Motor neuron (in vitro differentiated cells): ENCODE measurements at regions of chr16 and their contacts with region 1.

Region 1: GRCh38 chr16:24499193-24499814 is 40.1 kb upstream of the RBBP6 start:
- ATAC-seq: peak; percentile 56 to 85 (median 66)
- H3K4me3 ChIP-seq: no peak overlapping the region
- H3K27ac ChIP-seq: no peak overlapping the region
- H3K4me1 ChIP-seq: no peaks in the 10 kb centered on the region

Region 2: GRCh38 chr16:22721511-22722100 is 1777.7 kb before region 1 on chr16:
- in situ Hi-C with region 1: no loop called
- ATAC-seq: peak in 3 of 8 experiments; percentile 80 to 96 (median 90)
- H3K4me3 ChIP-seq: no peak overlapping the region
- H3K27ac ChIP-seq: no peak overlapping the region
- H3K4me1 ChIP-seq: no peaks in the 10 kb centered on the region

Region 3: GRCh38 chr16:24041826-24042631 is 457.3 kb before region 1 on chr16:
- in situ Hi-C with region 1: loop called in 8 of 9 experiments (anchors 5 to 25 kb)
- ATAC-seq: peak; percentile 35 to 92 (median 54)
- H3K4me3 ChIP-seq: no peak overlapping the region
- H3K27ac ChIP-seq: no peak overlapping the region
- H3K4me1 ChIP-seq: no peaks in the 10 kb centered on the region

Region 4: DNA sequence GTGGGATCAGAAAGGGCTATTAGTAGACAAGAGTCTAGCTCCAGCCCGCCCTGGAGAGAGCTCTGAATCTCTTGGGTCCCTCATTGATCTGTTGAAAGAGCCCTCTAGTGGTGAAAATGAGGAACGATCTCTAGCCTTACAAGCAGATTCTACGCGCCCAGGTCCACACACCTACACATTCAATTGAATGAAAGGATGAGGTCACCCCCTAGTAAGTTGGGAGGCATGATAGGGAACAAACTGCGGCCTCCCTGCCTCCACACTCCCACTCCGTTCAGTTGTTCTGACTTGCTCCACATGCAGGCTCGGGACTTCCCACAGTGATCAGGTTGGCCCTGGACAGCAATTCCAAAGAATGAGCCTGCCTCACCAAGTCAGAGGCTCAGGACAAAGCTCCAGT is 246.1 kb before region 1 on chr16:
- in situ Hi-C with region 1: loop called in 1 of 9 experiments (anchors 25 kb)
- ATAC-seq: peak in 7 of 8 experiments; percentile 24 to 69 (median 41)
- H3K4me3 ChIP-seq: no peak overlapping the region
- H3K27ac ChIP-seq: no peak overlapping the region
- H3K4me1 ChIP-seq: no peaks in the 10 kb centered on the region

Region 5: DNA sequence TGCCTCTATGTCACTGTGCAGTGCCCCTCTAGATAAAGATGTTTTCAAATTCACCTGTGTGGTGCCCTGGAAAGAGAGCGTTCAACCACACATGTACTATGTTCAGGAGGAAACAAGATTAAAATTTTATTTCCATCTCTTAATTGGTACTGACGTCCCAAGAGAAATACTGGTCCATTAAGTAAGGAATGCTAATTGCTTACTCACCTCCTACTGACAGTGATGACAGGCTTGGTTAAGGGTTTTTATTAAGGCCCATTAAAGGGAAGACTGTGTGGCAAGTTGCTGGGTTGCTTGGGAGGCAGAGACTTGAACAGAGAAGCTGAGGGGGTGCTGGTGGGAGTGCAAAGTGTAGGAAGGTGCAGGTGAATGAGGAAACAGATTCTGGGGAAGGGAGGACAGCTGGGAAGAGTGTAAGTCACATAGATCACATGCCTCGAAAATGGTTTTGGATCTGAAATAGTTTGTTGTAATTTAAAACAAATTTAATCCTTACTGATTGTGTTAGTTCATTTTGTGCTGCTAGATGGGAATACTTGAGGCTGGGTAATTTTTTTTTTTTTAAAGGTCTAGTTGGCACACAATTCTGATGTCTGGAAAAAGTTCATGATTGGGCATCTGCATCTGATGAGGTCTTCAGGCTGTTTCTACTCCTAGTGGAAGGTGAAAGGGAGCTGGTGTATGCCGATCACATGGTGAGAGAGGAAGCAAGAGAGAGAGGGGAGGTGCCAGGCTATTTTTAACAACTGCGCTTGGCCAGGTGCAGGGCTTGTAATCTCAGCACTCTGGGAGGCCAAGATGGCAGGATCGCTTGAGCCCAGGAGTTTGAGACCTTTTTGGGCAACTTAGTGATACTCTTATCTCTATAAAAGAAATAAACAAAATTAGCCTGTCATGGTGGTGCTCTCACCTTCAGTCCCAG is 102.7 kb before region 1 on chr16:
- in situ Hi-C with region 1: no loop called
- ATAC-seq: peak in 2 of 8 experiments; percentile 38 to 71
- H3K4me3 ChIP-seq: no peak overlapping the region
- H3K27ac ChIP-seq: no peak overlapping the region
- H3K4me1 ChIP-seq: no peaks in the 10 kb centered on the region

Region 6: GRCh38 chr16:24430945-24431760 is 68.2 kb before region 1 on chr16:
- in situ Hi-C with region 1: no loop called
- ATAC-seq: peak; percentile 80 to 99 (median 96)
- H3K4me3 ChIP-seq: no peak overlapping the region
- H3K27ac ChIP-seq: no peak overlapping the region
- H3K4me1 ChIP-seq: no peaks in the 10 kb centered on the region